Activated CD4-positive, alpha-beta T cell treated with anti-CD3 and anti-CD28 coated beads, Interleukin-2, amount 10 ng/mL, durations not matched to agents 24 days and 14 days (primary cell): ENCODE measurements at regions of chr6 and their contacts with region 1.

Region 1: GRCh38 chr6:34154668-34155447 is 9.0 kb upstream of the GRM4 start:
- DNase-seq: peak; percentile 91
- H3K4me3 Mint-ChIP-seq: peak overlapping the region; percentile 48
- H3K27ac Mint-ChIP-seq: no peak overlapping the region
- H3K4me1 Mint-ChIP-seq: no peaks in the 10 kb centered on the region
- H3K27me3 Mint-ChIP-seq: peaks cover 57% of the 10 kb centered on the region

Region 2: DNA sequence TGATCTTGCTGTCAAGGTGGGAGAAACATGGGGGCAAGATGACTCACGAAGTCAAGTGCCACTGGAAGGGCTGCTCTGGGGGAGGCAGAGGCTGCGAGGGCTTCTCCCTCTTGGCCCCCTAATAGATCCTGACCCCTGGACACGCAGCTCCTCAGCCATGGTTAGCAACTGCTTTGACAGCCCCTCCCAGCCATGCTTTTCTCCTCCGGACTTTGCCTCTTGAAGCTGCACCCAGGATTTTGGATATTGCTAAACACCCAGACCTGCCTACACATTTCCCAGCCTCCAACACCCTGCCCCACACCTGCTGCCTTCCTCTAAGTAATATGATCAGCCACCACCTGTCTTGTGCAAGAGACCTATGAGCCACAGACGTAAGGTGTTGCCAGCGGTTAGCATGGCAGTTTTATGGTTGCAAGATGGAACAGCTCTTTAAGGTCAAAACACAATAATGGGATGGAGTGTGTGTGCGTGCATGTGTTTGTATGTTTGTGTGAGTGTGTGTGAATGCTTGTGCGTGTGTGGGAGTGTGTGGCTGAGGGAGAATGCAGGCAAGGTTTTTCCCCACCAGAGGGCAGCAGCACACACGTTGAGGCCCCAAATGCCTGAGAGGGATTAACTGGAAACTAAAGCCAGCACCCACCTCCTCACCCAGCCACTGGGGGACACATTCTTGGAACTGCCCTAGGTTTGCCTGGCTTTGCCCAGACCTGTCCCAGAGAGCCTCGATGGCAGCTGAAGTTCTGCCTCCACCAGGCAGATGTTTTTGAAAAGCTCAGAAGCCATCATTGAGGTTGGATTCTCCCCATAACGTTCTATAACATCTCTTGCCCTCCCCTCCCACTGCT is 410.6 kb before region 1 on chr6:
- intact Hi-C with region 1: loop called (anchors 1 kb)
- DNase-seq: peak; percentile 92
- H3K4me3 Mint-ChIP-seq: no peak overlapping the region
- H3K27ac Mint-ChIP-seq: no peak overlapping the region
- H3K4me1 Mint-ChIP-seq: peaks cover 3% of the 10 kb centered on the region
- H3K27me3 Mint-ChIP-seq: peaks cover 15% of the 10 kb centered on the region

Region 3: GRCh38 chr6:33771146-33772081 is 383.4 kb before region 1 on chr6:
- intact Hi-C with region 1: loop called (anchors 2 kb)
- DNase-seq: peak; percentile 89
- H3K4me3 Mint-ChIP-seq: no peak overlapping the region
- H3K27ac Mint-ChIP-seq: no peak overlapping the region
- H3K4me1 Mint-ChIP-seq: peaks cover 17% of the 10 kb centered on the region
- H3K27me3 Mint-ChIP-seq: peaks cover 5% of the 10 kb centered on the region

Region 4: DNA sequence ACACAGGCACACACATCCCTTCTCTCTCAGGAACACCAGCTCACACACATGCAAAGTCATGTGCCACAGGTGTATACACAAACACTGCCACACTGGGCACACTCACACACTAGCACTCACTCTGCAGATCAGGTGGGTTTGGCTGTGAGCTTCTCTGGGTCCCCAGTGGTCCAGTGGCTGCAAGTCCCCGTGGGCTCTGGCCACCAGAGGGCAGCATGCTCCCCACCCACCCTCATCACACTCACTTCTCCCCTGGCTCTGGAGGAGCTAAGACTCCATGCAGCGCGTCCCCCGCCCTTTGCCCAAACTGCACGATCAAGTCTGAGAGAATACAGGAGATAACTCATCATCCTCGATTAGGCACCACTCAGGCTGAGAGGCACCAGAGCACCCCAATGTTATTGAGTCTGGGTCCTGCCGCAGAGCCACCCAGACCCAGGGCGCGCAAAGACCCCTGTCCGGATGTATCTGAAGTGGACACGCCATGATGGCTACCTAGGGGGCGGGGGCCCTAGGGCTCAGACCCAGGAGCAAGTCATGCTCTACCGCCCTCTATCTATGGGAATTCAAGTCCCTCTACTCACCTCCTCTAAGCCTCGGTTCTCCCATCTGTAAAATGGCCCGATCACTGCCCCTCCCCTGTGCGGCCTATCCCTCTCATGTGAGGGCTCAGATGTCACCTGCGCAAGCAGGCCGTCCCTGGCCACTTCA is 99.5 kb before region 1 on chr6:
- intact Hi-C with region 1: loop called (anchors 1 kb)
- DNase-seq: peak; percentile 86
- H3K4me3 Mint-ChIP-seq: no peak overlapping the region
- H3K27ac Mint-ChIP-seq: no peak overlapping the region
- H3K4me1 Mint-ChIP-seq: peaks cover 4% of the 10 kb centered on the region
- H3K27me3 Mint-ChIP-seq: no peaks in the 10 kb centered on the region

Region 5: GRCh38 chr6:34332251-34333198 is 177.7 kb after region 1 on chr6:
- intact Hi-C with region 1: no loop called
- DNase-seq: no peak
- H3K4me3 Mint-ChIP-seq: no peak overlapping the region
- H3K27ac Mint-ChIP-seq: no peak overlapping the region
- H3K4me1 Mint-ChIP-seq: peaks cover 13% of the 10 kb centered on the region
- H3K27me3 Mint-ChIP-seq: no peaks in the 10 kb centered on the region

Region 6: GRCh38 chr6:34585512-34586061 is 430.7 kb after region 1 on chr6:
- intact Hi-C with region 1: no loop called
- DNase-seq: no peak
- H3K4me3 Mint-ChIP-seq: no peak overlapping the region
- H3K27ac Mint-ChIP-seq: no peak overlapping the region
- H3K4me1 Mint-ChIP-seq: peaks cover 9% of the 10 kb centered on the region
- H3K27me3 Mint-ChIP-seq: no peaks in the 10 kb centered on the region